Endothelial cell of umbilical vein (primary cell): ENCODE measurements at regions of chr16 and their contacts with region 1.

Region 1: DNA sequence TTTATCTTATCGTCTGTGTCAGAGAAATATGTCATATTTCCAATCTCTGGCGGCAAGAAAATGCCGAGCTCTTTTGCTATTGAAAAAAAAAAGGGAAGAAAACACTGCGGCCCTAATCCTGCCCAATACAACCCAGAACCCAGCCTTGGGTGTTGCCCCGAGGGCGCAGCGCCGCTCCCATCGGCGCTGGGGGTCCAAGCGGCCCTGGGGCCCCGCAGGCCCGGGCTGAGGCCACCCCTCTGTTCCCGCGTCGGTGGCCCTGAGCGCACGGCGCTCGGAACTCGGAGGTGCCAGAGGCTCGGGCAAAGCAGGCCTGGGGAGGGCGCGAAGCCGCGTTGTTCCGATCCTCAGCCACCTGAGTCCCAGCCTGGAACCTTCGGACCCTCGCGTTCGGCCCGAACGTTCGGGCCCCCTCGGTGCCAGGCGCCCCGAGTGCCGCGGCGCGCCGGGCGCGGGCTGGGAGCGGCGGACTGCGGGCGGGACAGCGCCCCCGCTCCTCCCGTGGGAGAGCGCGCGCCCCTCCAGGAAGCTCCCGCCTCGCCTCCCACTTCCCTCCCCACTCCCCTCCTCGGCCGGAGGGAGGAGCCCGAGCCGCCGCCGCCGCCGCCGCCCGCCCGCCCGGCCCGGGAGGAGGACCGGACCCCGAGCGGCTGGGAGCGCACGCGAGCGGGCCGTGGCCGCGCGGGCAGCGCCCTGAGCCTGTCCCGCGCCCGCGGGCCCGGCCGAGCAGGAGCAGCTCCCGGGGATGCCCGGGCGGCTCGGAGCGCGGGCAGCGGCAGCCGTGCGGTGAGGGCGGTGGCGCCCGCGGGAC is at the start of gene CPNE2:
- DNase-seq: peak; percentile 65
- H3K4me3 ChIP-seq: peak within 1 kb of the TSS; percentile 64 to 86 (median 74)
- H3K27ac ChIP-seq: peak within 1 kb of the TSS; percentile 58
- H3K4me1 ChIP-seq: peaks cover 21% of the 10 kb centered on the region
- H3K27me3 ChIP-seq: no peaks in the 10 kb centered on the region
- CTCF ChIP-seq: no peak
- POLR2A ChIP-seq: peak; percentile 45
- total RNA-seq, gene CPNE2: 91.9 and 92.0 TPM in 2 replicates

Region 2: GRCh38 chr16:56964243-56965148 is 127.7 kb before region 1 on chr16:
- CTCF ChIA-PET with region 1: interaction called, 10 read pairs
- POLR2A ChIA-PET with region 1: no interaction called
- dilution Hi-C with region 1: no loop called
- intact Hi-C with region 1: no loop called
- DNase-seq: peak; percentile 74
- H3K4me3 ChIP-seq: no peak overlapping the region
- H3K27ac ChIP-seq: no peak overlapping the region
- H3K4me1 ChIP-seq: peaks cover 18% of the 10 kb centered on the region
- H3K27me3 ChIP-seq: no peaks in the 10 kb centered on the region
- CTCF ChIP-seq: peak; percentile 96 to 99
- POLR2A ChIP-seq: no peak

Region 3: GRCh38 chr16:57106767-57107166 is 14.6 kb after region 1 on chr16:
- CTCF ChIA-PET with region 1: interaction called, 48 read pairs
- POLR2A ChIA-PET with region 1: interaction called, 9 read pairs
- dilution Hi-C with region 1: no loop called
- intact Hi-C with region 1: no loop called
- DNase-seq: peak; percentile 14
- H3K4me3 ChIP-seq: no peak overlapping the region
- H3K27ac ChIP-seq: no peak overlapping the region
- H3K4me1 ChIP-seq: no peaks in the 10 kb centered on the region
- H3K27me3 ChIP-seq: no peaks in the 10 kb centered on the region
- CTCF ChIP-seq: no peak
- POLR2A ChIP-seq: no peak

Region 4: DNA sequence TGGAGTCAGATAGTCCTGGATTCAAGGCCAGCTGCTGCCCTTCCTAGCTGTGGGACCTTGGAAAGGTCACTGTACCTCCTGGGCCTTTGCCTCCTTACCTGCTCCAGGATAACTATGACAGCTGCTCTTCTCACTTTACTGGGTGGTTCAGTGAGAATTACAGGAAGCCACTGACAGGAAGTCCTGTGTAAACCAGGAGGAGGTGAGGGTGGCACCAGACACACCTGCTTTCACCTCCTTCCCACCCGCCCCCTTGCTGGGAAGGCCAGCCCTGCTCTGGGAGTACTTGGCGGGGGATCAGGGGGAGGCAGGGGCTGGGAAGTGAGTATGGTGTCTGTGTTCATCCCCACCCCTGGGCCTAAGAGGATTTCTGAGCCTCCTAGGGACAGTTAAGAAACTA is 42.8 kb after region 1 on chr16:
- CTCF ChIA-PET with region 1: interaction called, 17 read pairs
- POLR2A ChIA-PET with region 1: no interaction called
- dilution Hi-C with region 1: no loop called
- intact Hi-C with region 1: no loop called
- DNase-seq: no peak
- H3K4me3 ChIP-seq: no peak overlapping the region
- H3K27ac ChIP-seq: no peak overlapping the region
- H3K4me1 ChIP-seq: peaks cover 7% of the 10 kb centered on the region
- H3K27me3 ChIP-seq: no peaks in the 10 kb centered on the region
- CTCF ChIP-seq: no peak
- POLR2A ChIP-seq: no peak

Region 5: GRCh38 chr16:57147381-57148221 is 55.4 kb after region 1 on chr16:
- CTCF ChIA-PET with region 1: interaction called, 57 read pairs
- POLR2A ChIA-PET with region 1: interaction called, 5 read pairs
- dilution Hi-C with region 1: no loop called
- intact Hi-C with region 1: loop called (anchors 2 kb)
- DNase-seq: peak; percentile 79
- H3K4me3 ChIP-seq: no peak overlapping the region
- H3K27ac ChIP-seq: peak overlapping the region; percentile 84
- H3K4me1 ChIP-seq: peaks cover 48% of the 10 kb centered on the region
- H3K27me3 ChIP-seq: no peaks in the 10 kb centered on the region
- CTCF ChIP-seq: no peak
- POLR2A ChIP-seq: peak; percentile 61

Region 6: GRCh38 chr16:57167953-57168352 is 75.8 kb after region 1 on chr16:
- CTCF ChIA-PET with region 1: interaction called, 71 read pairs
- POLR2A ChIA-PET with region 1: no interaction called
- dilution Hi-C with region 1: no loop called
- intact Hi-C with region 1: loop called (anchors 1 kb)
- DNase-seq: peak; percentile 83
- H3K4me3 ChIP-seq: no peak overlapping the region
- H3K27ac ChIP-seq: no peak overlapping the region
- H3K4me1 ChIP-seq: no peaks in the 10 kb centered on the region
- H3K27me3 ChIP-seq: no peaks in the 10 kb centered on the region
- CTCF ChIP-seq: peak; percentile 50 to 51
- POLR2A ChIP-seq: no peak